ENCODE measurements at regions of chr15 and their contacts with region 1.

Region 1: GRCh38 chr15:41774062-41774881 is at the start of gene MAPKBP1:
- DNase-seq: peak; percentile 97
- H3K4me3 ChIP-seq: peak within 1 kb of the TSS; percentile 90
- H3K27ac ChIP-seq: peak within 1 kb of the TSS; percentile 91
- H3K4me1 ChIP-seq: peaks cover 56% of the 10 kb centered on the region
- H3K27me3 ChIP-seq: no peaks in the 10 kb centered on the region
- CTCF ChIP-seq: peak; percentile 67
- total RNA-seq, gene MAPKBP1: 13.6 TPM

Region 2: DNA sequence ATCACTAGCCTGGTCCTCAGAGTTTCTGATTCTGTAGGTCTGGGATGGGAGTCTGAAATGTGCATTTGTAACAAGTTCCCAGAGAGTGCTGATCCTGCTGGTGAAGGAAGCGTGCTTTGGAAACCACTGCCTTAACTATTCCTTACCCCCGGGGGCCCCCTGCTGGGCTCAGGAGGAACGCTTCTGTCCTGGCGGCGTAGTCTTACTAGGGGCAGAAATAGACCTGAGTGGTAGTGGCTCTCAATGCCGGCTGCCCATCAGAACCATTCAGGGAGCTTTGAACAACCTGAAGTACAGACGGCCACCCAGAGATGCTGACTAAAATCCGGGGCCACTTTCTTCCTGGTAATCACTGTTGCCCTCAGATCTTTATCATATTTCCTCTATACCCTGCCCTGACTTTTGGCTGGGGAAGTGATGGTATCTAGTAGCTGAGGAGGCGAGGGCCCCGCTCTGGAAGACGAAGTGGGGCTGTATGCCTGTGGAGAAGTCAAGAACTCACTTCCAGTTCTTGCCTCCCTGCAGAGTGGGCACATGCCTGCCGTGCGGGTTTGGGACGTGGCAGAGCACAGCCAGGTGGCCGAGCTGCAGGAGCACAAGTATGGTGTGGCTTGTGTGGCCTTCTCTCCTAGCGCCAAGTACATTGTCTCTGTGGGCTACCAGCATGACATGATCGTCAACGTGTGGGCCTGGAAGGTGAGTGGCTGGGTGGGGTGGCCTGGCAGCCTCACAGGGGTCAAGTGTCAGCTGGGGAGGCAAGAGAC is 37.3 kb after region 1 on chr15:
- intact Hi-C with region 1: loop called (anchors 2 kb)
- DNase-seq: peak; percentile 84
- H3K4me3 ChIP-seq: no peak overlapping the region
- H3K27ac ChIP-seq: no peak overlapping the region
- H3K4me1 ChIP-seq: peaks cover 7% of the 10 kb centered on the region
- H3K27me3 ChIP-seq: no peaks in the 10 kb centered on the region
- CTCF ChIP-seq: peak; percentile 94

Region 3: DNA sequence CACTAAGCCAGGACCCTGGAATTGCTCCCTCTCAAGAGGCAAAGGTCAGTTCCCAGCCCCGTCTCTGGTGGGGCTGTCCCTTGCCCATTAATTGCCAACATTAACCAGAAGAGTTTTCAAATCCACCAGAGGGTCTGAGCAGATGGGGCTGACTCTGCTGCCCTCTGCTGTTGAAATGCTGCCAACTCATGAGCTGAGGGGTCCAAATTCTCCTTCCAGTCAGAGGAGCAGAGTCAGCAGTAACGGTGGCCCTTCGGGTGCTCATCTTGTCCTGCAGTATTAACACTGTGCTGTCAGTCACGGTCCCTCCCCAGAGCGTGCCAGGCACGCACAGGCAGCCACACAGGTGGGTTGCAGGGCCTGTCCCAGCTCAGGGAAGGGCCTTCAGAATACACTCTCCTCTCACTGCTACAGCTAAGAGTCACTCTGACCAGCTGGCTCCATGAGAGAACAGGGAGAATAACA is 130.3 kb after region 1 on chr15:
- intact Hi-C with region 1: loop called (anchors 10 kb)
- DNase-seq: peak; percentile 61
- H3K4me3 ChIP-seq: no peak overlapping the region
- H3K27ac ChIP-seq: peak overlapping the region; percentile 72
- H3K4me1 ChIP-seq: peaks cover 58% of the 10 kb centered on the region
- H3K27me3 ChIP-seq: no peaks in the 10 kb centered on the region
- CTCF ChIP-seq: peak; percentile 87